Activated naive CD4-positive, alpha-beta T cell treated with anti-CD3 and anti-CD28 coated beads for 36 hours (primary cell): ENCODE measurements at regions of chr4 and their contacts with region 1.

Region 1: DNA sequence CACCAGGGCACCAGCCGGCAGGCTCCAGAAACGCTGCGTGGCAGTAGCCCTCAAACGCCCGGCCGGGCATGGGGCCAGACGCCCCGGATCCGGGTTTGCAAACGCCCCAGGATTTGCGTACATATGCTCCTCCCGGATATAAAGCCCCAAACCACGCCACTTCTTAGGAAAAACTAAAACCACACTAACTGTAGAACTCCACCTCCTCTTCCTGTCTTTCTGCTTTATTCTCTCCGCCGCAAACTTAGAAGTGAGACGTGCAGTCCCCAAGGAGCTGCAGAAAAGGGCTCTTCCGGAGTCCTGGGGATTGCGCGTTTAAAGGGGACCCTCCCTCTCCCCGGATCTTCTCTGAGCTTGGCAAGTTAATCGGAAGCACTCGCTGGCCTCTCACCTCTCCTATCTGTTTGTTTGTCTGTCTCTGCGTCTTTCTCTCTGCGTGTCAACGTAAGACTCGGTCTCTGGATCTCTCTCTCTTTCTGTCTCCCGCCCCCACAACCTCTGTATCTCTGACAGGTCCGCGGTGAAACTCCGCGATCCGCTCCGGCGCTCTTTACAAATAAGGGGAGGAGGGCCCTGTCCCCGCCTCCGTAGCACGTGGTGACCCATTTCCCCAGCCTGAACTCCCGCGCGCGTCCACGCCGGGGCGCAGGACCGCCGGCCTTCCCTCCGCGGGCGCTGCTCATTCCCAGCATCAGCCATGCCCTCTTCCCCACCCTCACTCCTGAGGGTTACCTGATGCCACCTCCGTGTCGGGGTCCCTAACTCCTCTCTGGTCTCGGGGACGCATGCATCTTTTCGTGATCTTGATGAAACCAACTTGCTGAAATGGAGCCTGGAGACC is at the start of gene SLC39A8:
- DNase-seq: peak; percentile 93
- H3K4me3 Mint-ChIP-seq: peak within 1 kb of the TSS; percentile 83
- H3K27ac Mint-ChIP-seq: peak within 1 kb of the TSS; percentile 93
- H3K4me1 Mint-ChIP-seq: peaks cover 38% of the 10 kb centered on the region
- H3K27me3 Mint-ChIP-seq: no peaks in the 10 kb centered on the region
- total RNA-seq, gene SLC39A8: 28.8 to 29.3 TPM

Region 2: DNA sequence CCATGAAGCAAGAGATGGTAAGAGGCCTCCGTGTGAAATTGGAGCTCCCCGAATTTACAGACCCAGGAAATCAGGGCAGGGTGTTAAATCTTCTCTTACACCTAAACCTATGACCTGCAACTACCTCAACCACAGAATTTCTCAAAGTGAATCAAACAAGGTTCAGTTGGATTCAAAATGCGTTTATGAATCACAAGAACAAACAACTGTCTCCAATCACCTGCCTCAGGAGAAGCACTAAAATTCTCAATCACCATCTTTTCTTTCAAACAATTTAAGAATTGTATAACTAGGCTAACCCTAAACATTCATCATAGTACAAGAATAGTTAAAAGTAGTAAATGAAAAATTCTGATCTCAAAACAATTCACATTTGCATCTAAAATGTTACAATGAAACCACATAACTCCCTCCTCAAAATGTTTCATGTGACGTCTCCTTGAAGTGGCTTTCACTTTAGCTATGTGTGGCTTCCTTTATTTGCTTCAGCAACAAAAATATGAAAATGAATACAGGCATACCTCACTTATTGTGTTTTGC is 1017.0 kb before region 1 on chr4:
- CTCF ChIA-PET with region 1: no interaction called
- intact Hi-C with region 1: loop called (anchors 1 kb)
- DNase-seq: peak; percentile 52
- H3K4me3 Mint-ChIP-seq: no peak overlapping the region
- H3K27ac Mint-ChIP-seq: peak overlapping the region; percentile 73
- H3K4me1 Mint-ChIP-seq: peaks cover 28% of the 10 kb centered on the region
- H3K27me3 Mint-ChIP-seq: peaks cover 25% of the 10 kb centered on the region

Region 3: GRCh38 chr4:101527188-101527587 is 818.0 kb before region 1 on chr4:
- CTCF ChIA-PET with region 1: no interaction called
- intact Hi-C with region 1: loop called (anchors 2 kb)
- DNase-seq: peak; percentile 88
- H3K4me3 Mint-ChIP-seq: no peak overlapping the region
- H3K27ac Mint-ChIP-seq: no peak overlapping the region
- H3K4me1 Mint-ChIP-seq: peaks cover 15% of the 10 kb centered on the region
- H3K27me3 Mint-ChIP-seq: peaks cover 45% of the 10 kb centered on the region

Region 4: GRCh38 chr4:102430461-102430910 is 85.3 kb after region 1 on chr4:
- CTCF ChIA-PET with region 1: interaction called, 18 read pairs
- intact Hi-C with region 1: loop called (anchors 1 kb)
- DNase-seq: no peak
- H3K4me3 Mint-ChIP-seq: peak overlapping the region; percentile 82
- H3K27ac Mint-ChIP-seq: peak overlapping the region; percentile 81
- H3K4me1 Mint-ChIP-seq: peaks cover 8% of the 10 kb centered on the region
- H3K27me3 Mint-ChIP-seq: peaks cover 5% of the 10 kb centered on the region

Region 5: DNA sequence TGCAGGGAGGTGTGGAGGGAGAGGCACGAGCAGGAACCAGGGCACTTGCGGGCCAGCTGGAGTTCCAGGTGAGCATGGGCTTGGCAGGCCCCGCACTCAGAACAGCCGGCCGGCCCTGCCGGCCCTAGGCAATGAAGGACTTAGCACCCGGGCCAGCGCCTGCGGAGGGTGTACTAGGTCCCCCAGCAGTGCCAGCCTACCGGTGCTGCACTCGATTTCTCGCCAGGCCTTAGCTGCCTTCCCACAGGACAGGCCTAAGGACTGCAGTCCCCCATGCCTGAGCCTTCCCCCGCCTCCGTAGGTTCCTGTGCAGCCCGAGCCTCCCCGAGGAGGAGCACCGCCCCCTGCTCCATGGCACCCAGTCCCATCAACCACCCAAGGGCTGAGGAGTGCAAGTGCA is 137.9 kb after region 1 on chr4:
- CTCF ChIA-PET with region 1: no interaction called
- intact Hi-C with region 1: no loop called
- DNase-seq: no peak
- H3K4me3 Mint-ChIP-seq: no peak overlapping the region
- H3K27ac Mint-ChIP-seq: no peak overlapping the region
- H3K4me1 Mint-ChIP-seq: peaks cover 4% of the 10 kb centered on the region
- H3K27me3 Mint-ChIP-seq: no peaks in the 10 kb centered on the region

Region 6: GRCh38 chr4:102620697-102621497 is 275.7 kb after region 1 on chr4:
- CTCF ChIA-PET with region 1: interaction called, 3 read pairs
- intact Hi-C with region 1: loop called (anchors 1 kb)
- DNase-seq: peak; percentile 30
- H3K4me3 Mint-ChIP-seq: no peak overlapping the region
- H3K27ac Mint-ChIP-seq: no peak overlapping the region
- H3K4me1 Mint-ChIP-seq: peaks cover 52% of the 10 kb centered on the region
- H3K27me3 Mint-ChIP-seq: no peaks in the 10 kb centered on the region

Region 7: DNA sequence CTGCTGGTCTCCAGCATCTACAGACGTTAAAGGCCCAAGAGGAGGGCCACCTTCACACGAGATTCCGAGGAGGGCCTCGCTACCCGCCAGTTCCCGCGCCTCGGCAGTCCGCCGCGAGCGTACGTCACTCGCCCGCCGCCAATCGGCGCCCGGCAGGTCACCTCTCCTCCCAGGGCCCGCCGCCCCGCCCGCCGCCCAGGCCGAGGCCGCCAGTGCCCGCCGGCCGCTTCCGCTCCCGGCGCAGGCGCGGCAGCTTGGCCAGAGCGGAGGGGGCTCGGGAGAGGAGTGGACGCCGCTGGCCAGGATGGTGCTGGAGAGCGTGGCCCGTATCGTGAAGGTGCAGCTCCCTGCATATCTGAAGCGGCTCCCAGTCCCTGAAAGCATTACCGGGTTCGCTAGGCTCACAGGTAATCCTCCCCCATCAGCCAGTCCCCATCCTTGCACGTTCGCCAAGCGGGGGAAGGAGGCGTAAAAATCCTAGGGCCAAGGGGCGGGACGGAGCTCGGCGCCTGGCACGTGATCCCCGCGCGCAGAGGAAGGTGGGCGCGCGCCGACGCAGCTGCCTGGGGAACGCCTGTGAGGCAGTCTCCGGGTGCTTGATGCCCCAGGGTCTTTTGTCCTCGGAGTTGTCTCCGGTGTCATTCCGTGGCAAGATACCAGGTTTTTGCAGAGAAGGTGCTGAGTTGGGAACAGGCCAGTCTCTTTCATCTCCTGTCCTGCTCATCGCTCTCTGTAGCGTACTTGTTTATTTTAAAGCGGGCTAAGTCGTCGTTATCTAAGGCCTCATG is 523.8 kb after region 1 on chr4 and contains the start of gene CISD2:
- CTCF ChIA-PET with region 1: no interaction called
- intact Hi-C with region 1: loop called (anchors 1 kb)
- DNase-seq: peak; percentile 95
- H3K4me3 Mint-ChIP-seq: peak within 1 kb of the TSS; percentile 94
- H3K27ac Mint-ChIP-seq: peak within 1 kb of the TSS; percentile 97
- H3K4me1 Mint-ChIP-seq: peaks cover 51% of the 10 kb centered on the region
- H3K27me3 Mint-ChIP-seq: no peaks in the 10 kb centered on the region
- total RNA-seq, gene CISD2: 25.1 to 25.7 TPM

Region 8: GRCh38 chr4:103008875-103009729 is 663.9 kb after region 1 on chr4:
- CTCF ChIA-PET with region 1: no interaction called
- intact Hi-C with region 1: no loop called
- DNase-seq: peak; percentile 22
- H3K4me3 Mint-ChIP-seq: no peak overlapping the region
- H3K27ac Mint-ChIP-seq: no peak overlapping the region
- H3K4me1 Mint-ChIP-seq: no peaks in the 10 kb centered on the region
- H3K27me3 Mint-ChIP-seq: no peaks in the 10 kb centered on the region

Region 9: GRCh38 chr4:103099691-103100392 is 754.7 kb after region 1 on chr4 and contains the start of gene BDH2:
- CTCF ChIA-PET with region 1: interaction called, 6 read pairs
- intact Hi-C with region 1: loop called (anchors 1 kb)
- DNase-seq: peak; percentile 65
- H3K4me3 Mint-ChIP-seq: peak within 1 kb of the TSS; percentile 79
- H3K27ac Mint-ChIP-seq: peak within 1 kb of the TSS; percentile 81
- H3K4me1 Mint-ChIP-seq: peaks cover 26% of the 10 kb centered on the region
- H3K27me3 Mint-ChIP-seq: no peaks in the 10 kb centered on the region
- total RNA-seq, gene BDH2: 16.2 to 20.4 TPM